GM12878 (cell line): ENCODE measurements at regions of chr6 and their contacts with region 1.

Region 1: DNA sequence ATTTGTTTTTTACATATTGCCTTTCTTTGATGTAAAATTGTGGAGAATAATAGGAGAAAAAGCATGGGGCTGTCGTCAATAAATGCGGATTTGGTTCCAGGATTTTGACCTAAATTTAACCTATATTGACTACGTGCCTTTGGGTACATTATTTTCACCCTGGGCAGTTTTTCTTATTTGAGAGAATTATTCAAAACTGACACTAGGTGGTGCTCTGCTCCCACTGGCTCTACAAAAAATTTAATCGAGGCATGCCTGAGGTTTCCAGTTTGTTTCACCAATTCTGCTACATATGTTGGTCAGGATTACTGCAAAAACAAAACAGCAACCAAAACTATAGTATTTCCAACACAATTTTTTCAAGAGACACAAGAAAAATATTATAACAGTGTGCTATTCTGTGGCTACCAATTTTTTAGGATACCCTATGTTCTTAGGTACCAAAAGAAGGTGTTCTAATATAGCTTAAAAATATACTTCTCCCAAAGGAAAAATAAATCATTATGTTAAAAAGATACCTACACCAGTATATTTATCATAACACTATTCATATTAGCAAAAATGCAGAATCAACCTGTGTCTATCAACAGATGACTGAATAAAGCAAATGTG is 48.6 kb upstream of the FABP7 start:
- DNase-seq: no peak
- ATAC-seq: peak; percentile 61
- H3K4me3 ChIP-seq: no peak overlapping the region
- H3K27ac ChIP-seq: no peak overlapping the region
- H3K4me1 ChIP-seq: no peaks in the 10 kb centered on the region
- H3K27me3 ChIP-seq: no peaks in the 10 kb centered on the region
- CTCF ChIP-seq: peak; percentile 61 to 77 (median 65)
- EP300 ChIP-seq: no peak
- POLR2A ChIP-seq: no peak
- RAD21 ChIP-seq: peak; percentile 86

Region 2: DNA sequence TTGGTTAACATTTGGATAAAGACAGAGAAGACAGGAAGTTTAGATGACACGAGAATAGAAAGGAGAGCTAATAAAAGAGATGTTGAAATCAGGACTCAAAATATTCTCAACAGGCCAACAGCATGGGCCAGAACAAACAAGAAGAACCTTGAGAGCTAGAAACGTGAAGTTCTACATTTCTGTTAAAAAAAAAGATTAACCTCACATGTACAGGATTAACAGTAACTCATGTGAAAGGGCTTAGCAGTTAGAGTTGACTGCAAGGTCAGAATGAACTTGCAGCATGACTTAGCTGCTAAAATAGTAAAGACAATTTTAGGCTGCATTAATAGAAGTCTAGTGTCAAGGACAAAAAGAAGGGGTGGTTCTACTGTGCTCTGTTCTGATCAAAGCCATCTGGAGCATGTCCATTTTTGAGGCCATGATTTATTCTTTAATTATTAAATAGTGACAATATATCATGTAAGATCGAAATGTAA is 662.6 kb before region 1 on chr6:
- CTCF ChIA-PET with region 1: no interaction called
- POLR2A ChIA-PET with region 1: no interaction called
- RAD21 ChIA-PET with region 1: no interaction called
- SMC1A ChIA-PET with region 1: no interaction called
- in situ Hi-C with region 1: no loop called
- intact Hi-C with region 1: no loop called
- DNase-seq: no peak
- ATAC-seq: no peak
- H3K4me3 ChIP-seq: no peak overlapping the region
- H3K27ac ChIP-seq: no peak overlapping the region
- H3K4me1 ChIP-seq: no peaks in the 10 kb centered on the region
- H3K27me3 ChIP-seq: no peaks in the 10 kb centered on the region
- CTCF ChIP-seq: no peak
- EP300 ChIP-seq: no peak
- POLR2A ChIP-seq: no peak
- RAD21 ChIP-seq: no peak

Region 3: DNA sequence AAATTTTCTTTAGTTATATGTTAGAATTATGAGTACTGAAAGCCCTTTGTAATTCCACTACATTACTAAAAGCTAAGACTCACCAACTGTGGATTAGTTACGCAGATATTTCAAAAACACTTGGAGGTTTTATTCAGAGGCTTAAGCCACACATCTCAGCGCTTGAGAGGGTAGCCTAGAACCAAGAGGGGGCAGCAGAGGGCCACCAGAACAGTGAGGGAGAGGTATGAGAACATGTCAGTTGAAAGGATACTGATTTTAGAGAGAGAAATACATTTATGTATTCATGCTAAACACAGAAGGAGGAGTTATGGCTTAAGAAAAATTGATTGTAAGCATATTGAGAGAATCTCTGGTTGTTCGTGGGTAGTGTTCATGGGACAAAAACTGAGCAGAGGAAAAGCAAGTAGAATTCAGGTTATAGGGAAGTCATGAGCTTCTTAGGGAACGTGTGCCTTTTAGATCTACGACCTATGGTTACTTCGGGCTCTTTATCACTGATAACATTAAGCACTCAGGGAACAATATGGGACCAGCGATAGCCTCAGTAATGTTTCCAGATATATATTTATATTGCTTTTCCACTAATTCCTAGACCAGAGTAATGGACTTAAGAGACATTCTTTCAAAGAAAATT is 238.8 kb before region 1 on chr6:
- CTCF ChIA-PET with region 1: interaction called, 97 read pairs
- POLR2A ChIA-PET with region 1: no interaction called
- RAD21 ChIA-PET with region 1: interaction called, 29 read pairs
- SMC1A ChIA-PET with region 1: interaction called, 86 read pairs
- in situ Hi-C with region 1: no loop called
- intact Hi-C with region 1: loop called (anchors 1 kb)
- DNase-seq: no peak
- ATAC-seq: peak; percentile 100
- H3K4me3 ChIP-seq: no peak overlapping the region
- H3K27ac ChIP-seq: no peak overlapping the region
- H3K4me1 ChIP-seq: no peaks in the 10 kb centered on the region
- H3K27me3 ChIP-seq: no peaks in the 10 kb centered on the region
- CTCF ChIP-seq: peak; percentile 82 to 92 (median 87)
- EP300 ChIP-seq: no peak
- POLR2A ChIP-seq: no peak
- RAD21 ChIP-seq: peak; percentile 86

Region 4: GRCh38 chr6:122620879-122621278 is 110.0 kb before region 1 on chr6:
- CTCF ChIA-PET with region 1: interaction called, 15 read pairs
- POLR2A ChIA-PET with region 1: no interaction called
- RAD21 ChIA-PET with region 1: no interaction called
- SMC1A ChIA-PET with region 1: interaction called, 6 read pairs
- in situ Hi-C with region 1: no loop called
- intact Hi-C with region 1: no loop called
- DNase-seq: no peak
- ATAC-seq: no peak
- H3K4me3 ChIP-seq: no peak overlapping the region
- H3K27ac ChIP-seq: no peak overlapping the region
- H3K4me1 ChIP-seq: no peaks in the 10 kb centered on the region
- H3K27me3 ChIP-seq: no peaks in the 10 kb centered on the region
- CTCF ChIP-seq: no peak
- EP300 ChIP-seq: no peak
- POLR2A ChIP-seq: no peak
- RAD21 ChIP-seq: no peak

Region 5: DNA sequence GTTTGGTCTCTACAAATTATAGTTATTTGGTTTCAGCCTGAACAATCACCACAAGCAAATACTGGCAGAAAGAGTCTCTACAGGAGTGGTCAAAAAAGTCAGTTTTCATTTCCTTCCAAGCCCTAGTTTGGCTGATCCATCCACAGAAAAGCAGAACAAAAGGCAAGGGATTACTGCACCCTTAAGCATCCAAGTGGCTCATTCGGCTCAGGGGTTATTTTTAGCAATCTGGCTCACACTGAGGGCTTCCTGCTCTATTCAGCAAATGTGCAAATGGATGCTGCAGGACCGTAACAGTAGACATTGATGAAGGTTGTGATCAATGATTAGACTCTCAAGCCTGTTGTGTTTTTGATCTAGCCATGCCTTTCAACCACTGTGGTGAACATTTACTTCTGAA is 13.5 kb before region 1 on chr6:
- CTCF ChIA-PET with region 1: interaction called, 29 read pairs
- POLR2A ChIA-PET with region 1: interaction called, 3 read pairs
- RAD21 ChIA-PET with region 1: interaction called, 10 read pairs
- SMC1A ChIA-PET with region 1: interaction called, 215 read pairs
- in situ Hi-C with region 1: no loop called
- intact Hi-C with region 1: no loop called
- DNase-seq: no peak
- ATAC-seq: no peak
- H3K4me3 ChIP-seq: no peak overlapping the region
- H3K27ac ChIP-seq: no peak overlapping the region
- H3K4me1 ChIP-seq: no peaks in the 10 kb centered on the region
- H3K27me3 ChIP-seq: no peaks in the 10 kb centered on the region; a peak in 1 of 4 replicates
- CTCF ChIP-seq: no peak
- EP300 ChIP-seq: no peak
- POLR2A ChIP-seq: no peak
- RAD21 ChIP-seq: no peak

Region 6: DNA sequence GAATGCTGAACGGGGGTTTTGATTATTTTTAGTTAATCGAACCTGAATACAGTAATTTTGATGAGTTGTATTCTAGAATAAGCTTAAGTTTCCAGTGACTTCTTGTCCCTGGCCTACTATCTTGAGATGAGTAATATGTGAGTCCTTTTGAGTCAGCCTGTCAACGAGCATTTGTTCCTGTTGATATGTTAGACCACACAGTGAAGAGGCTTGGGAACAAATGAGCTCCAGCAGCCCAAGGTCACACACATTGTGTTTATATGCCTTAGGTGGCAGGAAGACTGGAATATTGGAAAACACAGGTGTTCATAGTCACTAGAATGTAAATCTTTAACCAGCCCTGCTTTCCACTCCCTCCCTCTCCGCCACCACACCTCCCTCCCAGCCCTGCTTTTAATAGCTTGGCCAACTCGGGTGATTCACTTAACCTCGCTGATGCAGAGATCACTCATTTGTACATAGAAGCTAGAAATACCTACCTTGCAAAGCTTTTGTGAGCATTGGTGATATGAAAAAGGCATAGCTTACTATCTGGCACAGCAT is 67.3 kb after region 1 on chr6:
- CTCF ChIA-PET with region 1: interaction called, 9 read pairs
- POLR2A ChIA-PET with region 1: no interaction called
- RAD21 ChIA-PET with region 1: interaction called, 22 read pairs
- SMC1A ChIA-PET with region 1: interaction called, 50 read pairs
- in situ Hi-C with region 1: no loop called
- intact Hi-C with region 1: no loop called
- DNase-seq: no peak
- ATAC-seq: peak; percentile 93
- H3K4me3 ChIP-seq: no peak overlapping the region
- H3K27ac ChIP-seq: no peak overlapping the region
- H3K4me1 ChIP-seq: no peaks in the 10 kb centered on the region
- H3K27me3 ChIP-seq: no peaks in the 10 kb centered on the region
- CTCF ChIP-seq: no peak
- EP300 ChIP-seq: peak in 1 of 2 experiments; percentile 14; a peak in 2 of 4 replicates
- POLR2A ChIP-seq: no peak
- RAD21 ChIP-seq: no peak

Region 7: DNA sequence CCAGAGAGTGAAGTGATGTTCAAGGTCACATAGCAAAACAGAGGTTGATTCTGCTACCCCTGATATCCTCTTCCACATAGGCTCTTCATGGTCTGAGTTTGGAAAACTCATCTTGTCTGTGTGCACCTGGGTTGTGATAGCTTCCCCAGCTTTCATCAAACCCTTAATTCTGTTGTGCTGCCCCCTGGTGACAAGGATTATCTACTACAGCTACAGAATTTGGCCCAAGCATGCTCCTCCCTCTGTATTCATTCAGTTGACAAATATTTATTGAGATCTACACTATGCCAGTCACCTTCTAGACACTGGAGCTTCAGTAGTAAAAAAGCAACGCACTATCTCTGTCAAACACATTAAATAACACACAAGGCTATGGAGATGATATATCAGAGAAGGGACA is 108.6 kb after region 1 on chr6:
- CTCF ChIA-PET with region 1: interaction called, 640 read pairs
- POLR2A ChIA-PET with region 1: interaction called, 3 read pairs
- RAD21 ChIA-PET with region 1: interaction called, 184 read pairs
- SMC1A ChIA-PET with region 1: interaction called, 237 read pairs
- in situ Hi-C with region 1: no loop called
- intact Hi-C with region 1: loop called (anchors 1 kb)
- DNase-seq: no peak
- ATAC-seq: peak; percentile 93
- H3K4me3 ChIP-seq: no peak overlapping the region
- H3K27ac ChIP-seq: no peak overlapping the region
- H3K4me1 ChIP-seq: no peaks in the 10 kb centered on the region
- H3K27me3 ChIP-seq: peaks cover 0 to 3% of the 10 kb centered on the region in 2 experiments; a peak in 1 of 4 replicates
- CTCF ChIP-seq: peak; percentile 59 to 68 (median 64); a peak in 5 of 6 replicates
- EP300 ChIP-seq: no peak
- POLR2A ChIP-seq: no peak
- RAD21 ChIP-seq: peak; percentile 58

Region 8: DNA sequence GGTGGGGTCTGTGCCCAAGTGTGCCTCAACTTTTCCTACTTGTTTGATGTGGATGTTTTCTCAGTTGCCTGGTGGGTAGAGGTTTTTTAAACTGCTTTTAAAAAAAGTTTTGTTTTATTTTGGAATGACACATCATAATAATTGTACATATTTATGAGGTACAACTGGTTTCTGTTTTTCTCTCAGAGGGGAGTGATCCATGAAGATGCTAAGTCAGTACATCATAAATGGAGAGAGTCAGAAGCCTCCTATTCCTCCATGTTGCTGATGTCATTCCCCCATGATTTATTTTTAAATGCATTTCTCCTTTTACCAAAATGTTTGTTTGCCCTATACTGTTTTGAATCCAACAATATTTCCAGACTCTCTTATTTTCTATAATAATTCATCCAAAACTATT is 187.8 kb after region 1 on chr6:
- CTCF ChIA-PET with region 1: no interaction called
- POLR2A ChIA-PET with region 1: no interaction called
- RAD21 ChIA-PET with region 1: no interaction called
- SMC1A ChIA-PET with region 1: no interaction called
- in situ Hi-C with region 1: no loop called
- intact Hi-C with region 1: no loop called
- DNase-seq: no peak
- ATAC-seq: no peak
- H3K4me3 ChIP-seq: no peak overlapping the region
- H3K27ac ChIP-seq: no peak overlapping the region
- H3K4me1 ChIP-seq: no peaks in the 10 kb centered on the region
- H3K27me3 ChIP-seq: no peaks in the 10 kb centered on the region
- CTCF ChIP-seq: no peak
- EP300 ChIP-seq: no peak
- POLR2A ChIP-seq: no peak
- RAD21 ChIP-seq: no peak